ENCODE measurements at regions of chr2 and their contacts with region 1.

Region 1: GRCh38 chr2:191150600-191151330 is at the start of gene STAT4:
- DNase-seq: peak; percentile 45
- ATAC-seq: peak; percentile 89
- H3K4me3 ChIP-seq: peak within 1 kb of the TSS; percentile 78
- H3K27ac ChIP-seq: no peak within 1 kb of the TSS
- H3K4me1 ChIP-seq: peaks cover 7% of the 10 kb centered on the region
- H3K27me3 ChIP-seq: peaks cover 0 to 3% of the 10 kb centered on the region in 2 experiments; a peak in 1 of 4 replicates
- CTCF ChIP-seq: no peak; a peak in 1 of 6 replicates
- EP300 ChIP-seq: peak; percentile 84 to 89; a peak in 3 of 4 replicates
- POLR2A ChIP-seq: peak; percentile 62
- RAD21 ChIP-seq: peak; percentile 28; the same call in 1 of the 2 replicates
- polyA plus RNA-seq, gene STAT4: 3.1 to 4.4 TPM

Region 2: DNA sequence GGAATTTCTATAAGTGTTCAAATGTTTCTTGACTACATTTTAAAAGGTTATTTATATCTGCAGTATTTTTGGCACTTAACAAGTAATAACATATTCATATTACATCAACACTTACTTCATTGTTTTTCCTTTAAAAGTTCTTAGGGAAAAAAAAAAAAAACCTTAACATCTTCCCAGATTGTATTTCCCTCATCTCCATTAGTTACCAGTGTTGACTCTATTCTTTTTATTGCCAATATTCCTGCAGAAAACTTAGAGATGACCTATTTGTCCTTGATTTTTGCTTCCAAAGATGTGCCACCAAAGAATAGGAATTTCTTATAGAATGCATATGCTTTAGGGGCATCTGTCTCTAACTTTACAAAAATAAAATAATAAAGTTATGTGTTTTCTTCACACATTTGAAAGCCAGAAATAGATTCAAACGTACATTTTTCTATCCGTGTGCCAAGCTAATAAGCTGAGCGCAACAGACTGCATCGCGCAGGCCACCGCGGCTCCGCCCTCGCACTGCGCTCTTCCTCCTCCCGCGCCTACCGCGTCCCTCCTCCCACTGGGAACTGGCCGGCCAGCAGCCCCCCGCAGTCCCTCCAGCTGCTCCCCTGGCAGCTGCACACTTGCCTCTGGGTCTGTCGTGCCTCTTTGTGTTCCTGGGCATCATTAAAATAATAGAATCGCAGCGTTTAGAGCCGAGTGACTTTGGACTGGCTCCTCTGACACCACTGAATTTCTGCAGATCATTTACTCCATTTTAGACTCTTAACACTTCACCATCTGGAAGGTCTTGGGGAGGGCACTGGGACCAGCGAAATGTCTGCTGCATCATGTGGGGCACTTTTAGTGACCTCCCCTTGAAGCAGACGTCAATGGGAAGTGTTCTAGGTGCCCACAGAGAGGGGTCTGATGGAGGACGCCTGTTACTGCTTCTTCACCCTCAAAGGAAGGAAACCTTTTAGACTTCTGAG is 523.0 kb before region 1 on chr2:
- CTCF ChIA-PET with region 1: no interaction called
- POLR2A ChIA-PET with region 1: no interaction called
- RAD21 ChIA-PET with region 1: no interaction called
- SMC1A ChIA-PET with region 1: no interaction called
- in situ Hi-C with region 1: no loop called
- intact Hi-C with region 1: no loop called
- DNase-seq: no peak
- ATAC-seq: peak; percentile 90
- H3K4me3 ChIP-seq: peak overlapping the region; percentile 41
- H3K27ac ChIP-seq: no peak overlapping the region
- H3K4me1 ChIP-seq: no peaks in the 10 kb centered on the region
- H3K27me3 ChIP-seq: no peaks in the 10 kb centered on the region
- CTCF ChIP-seq: no peak
- EP300 ChIP-seq: no peak
- POLR2A ChIP-seq: no peak
- RAD21 ChIP-seq: no peak

Region 3: GRCh38 chr2:190822043-190822442 is 328.7 kb before region 1 on chr2:
- CTCF ChIA-PET with region 1: no interaction called
- POLR2A ChIA-PET with region 1: no interaction called
- RAD21 ChIA-PET with region 1: no interaction called
- SMC1A ChIA-PET with region 1: no interaction called
- in situ Hi-C with region 1: no loop called
- intact Hi-C with region 1: no loop called
- DNase-seq: no peak
- ATAC-seq: no peak
- H3K4me3 ChIP-seq: no peak overlapping the region
- H3K27ac ChIP-seq: no peak overlapping the region
- H3K4me1 ChIP-seq: no peaks in the 10 kb centered on the region
- H3K27me3 ChIP-seq: no peaks in the 10 kb centered on the region
- CTCF ChIP-seq: no peak
- EP300 ChIP-seq: no peak
- POLR2A ChIP-seq: no peak
- RAD21 ChIP-seq: no peak

Region 4: DNA sequence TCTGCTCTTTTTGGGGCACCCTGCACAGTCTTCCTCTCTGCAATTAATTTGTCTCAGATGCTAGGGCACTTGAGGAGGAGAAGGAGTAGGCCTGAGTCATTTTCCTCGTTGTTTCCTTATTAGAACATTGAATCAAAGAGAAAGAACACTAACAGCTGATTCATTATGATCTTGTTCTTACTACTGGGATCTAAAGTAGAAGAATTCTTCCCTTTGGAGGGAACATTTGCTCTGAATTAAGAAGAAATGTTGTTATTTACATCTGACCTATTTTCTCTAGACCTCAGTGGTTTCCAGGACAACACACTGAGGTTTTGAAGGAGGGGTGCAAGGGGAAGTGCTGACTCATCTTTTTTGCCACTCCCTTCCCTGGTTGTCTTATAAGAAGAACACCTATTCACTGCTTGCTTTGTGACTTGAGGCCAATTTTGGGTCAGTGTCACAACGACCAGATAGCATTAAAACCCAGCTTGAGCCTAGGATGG is 112.5 kb before region 1 on chr2:
- CTCF ChIA-PET with region 1: interaction called, 13 read pairs
- POLR2A ChIA-PET with region 1: no interaction called
- RAD21 ChIA-PET with region 1: no interaction called
- SMC1A ChIA-PET with region 1: interaction called, 5 read pairs
- in situ Hi-C with region 1: no loop called
- intact Hi-C with region 1: no loop called
- DNase-seq: no peak
- ATAC-seq: peak; percentile 68
- H3K4me3 ChIP-seq: no peak overlapping the region
- H3K27ac ChIP-seq: no peak overlapping the region
- H3K4me1 ChIP-seq: no peaks in the 10 kb centered on the region; the same call in 1 of the 2 replicates
- H3K27me3 ChIP-seq: no peaks in the 10 kb centered on the region
- CTCF ChIP-seq: no peak
- EP300 ChIP-seq: no peak
- POLR2A ChIP-seq: no peak
- RAD21 ChIP-seq: no peak

Region 5: GRCh38 chr2:191066197-191066918 is 84.4 kb before region 1 on chr2:
- CTCF ChIA-PET with region 1: interaction called, 24 read pairs
- POLR2A ChIA-PET with region 1: no interaction called
- RAD21 ChIA-PET with region 1: interaction called, 5 read pairs
- SMC1A ChIA-PET with region 1: interaction called, 26 read pairs
- in situ Hi-C with region 1: no loop called
- intact Hi-C with region 1: no loop called
- DNase-seq: no peak
- ATAC-seq: no peak
- H3K4me3 ChIP-seq: no peak overlapping the region
- H3K27ac ChIP-seq: no peak overlapping the region
- H3K4me1 ChIP-seq: no peaks in the 10 kb centered on the region
- H3K27me3 ChIP-seq: no peaks in the 10 kb centered on the region; a peak in 1 of 4 replicates
- CTCF ChIP-seq: no peak
- EP300 ChIP-seq: no peak
- POLR2A ChIP-seq: no peak
- RAD21 ChIP-seq: no peak

Region 6: DNA sequence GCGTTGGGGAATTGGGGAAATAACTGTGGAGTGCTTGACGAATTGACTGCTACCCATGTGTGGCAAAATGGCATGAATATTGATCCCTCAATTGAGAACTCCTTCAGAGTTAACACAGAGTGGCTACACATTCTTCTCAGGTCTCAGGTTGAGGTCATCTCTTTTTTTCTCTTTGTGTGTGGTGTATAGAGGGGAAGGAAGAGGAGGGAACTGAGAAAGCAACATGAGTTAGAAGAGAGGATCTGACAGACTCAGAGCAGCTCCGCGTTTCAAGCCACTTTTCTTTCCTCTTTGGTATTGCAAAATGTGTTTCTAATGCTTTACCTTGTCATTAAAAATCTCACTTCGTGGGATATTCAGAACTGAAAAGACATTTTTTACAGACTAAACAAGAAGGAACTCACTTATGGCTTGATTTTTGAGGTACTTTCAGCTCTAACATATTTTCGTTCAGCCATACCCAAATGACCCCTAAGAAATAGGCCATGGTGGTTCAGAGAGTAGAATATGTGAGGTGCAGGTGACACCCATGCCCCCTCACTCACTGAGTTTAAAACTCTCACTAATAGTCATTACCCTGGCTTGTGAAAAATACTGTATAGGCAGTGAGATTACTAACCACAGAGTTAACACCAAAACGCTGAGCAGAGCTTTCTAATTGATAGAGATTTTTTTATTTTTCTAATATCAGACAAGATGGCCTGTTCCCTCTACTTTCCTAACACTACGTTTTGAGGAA is 22.4 kb before region 1 on chr2:
- CTCF ChIA-PET with region 1: interaction called, 10 read pairs
- POLR2A ChIA-PET with region 1: no interaction called
- RAD21 ChIA-PET with region 1: interaction called, 5 read pairs
- SMC1A ChIA-PET with region 1: interaction called, 14 read pairs
- in situ Hi-C with region 1: no loop called
- intact Hi-C with region 1: loop called (anchors 2 kb)
- DNase-seq: no peak
- ATAC-seq: peak; percentile 94
- H3K4me3 ChIP-seq: no peak overlapping the region
- H3K27ac ChIP-seq: no peak overlapping the region
- H3K4me1 ChIP-seq: no peaks in the 10 kb centered on the region
- H3K27me3 ChIP-seq: no peaks in the 10 kb centered on the region
- CTCF ChIP-seq: no peak
- EP300 ChIP-seq: no peak
- POLR2A ChIP-seq: no peak
- RAD21 ChIP-seq: no peak

Region 7: GRCh38 chr2:191178806-191179514 is 28.2 kb after region 1 on chr2:
- CTCF ChIA-PET with region 1: interaction called, 19 read pairs
- POLR2A ChIA-PET with region 1: no interaction called
- RAD21 ChIA-PET with region 1: no interaction called
- SMC1A ChIA-PET with region 1: no interaction called
- in situ Hi-C with region 1: no loop called
- intact Hi-C with region 1: no loop called
- DNase-seq: no peak
- ATAC-seq: no peak; the same call in 2 of the 3 replicates
- H3K4me3 ChIP-seq: no peak overlapping the region
- H3K27ac ChIP-seq: no peak overlapping the region
- H3K4me1 ChIP-seq: peaks cover 14% of the 10 kb centered on the region; the same call in 1 of the 2 replicates
- H3K27me3 ChIP-seq: peaks cover 0 to 2% of the 10 kb centered on the region in 2 experiments; a peak in 1 of 4 replicates
- CTCF ChIP-seq: no peak
- EP300 ChIP-seq: no peak
- POLR2A ChIP-seq: no peak
- RAD21 ChIP-seq: no peak

Region 8: DNA sequence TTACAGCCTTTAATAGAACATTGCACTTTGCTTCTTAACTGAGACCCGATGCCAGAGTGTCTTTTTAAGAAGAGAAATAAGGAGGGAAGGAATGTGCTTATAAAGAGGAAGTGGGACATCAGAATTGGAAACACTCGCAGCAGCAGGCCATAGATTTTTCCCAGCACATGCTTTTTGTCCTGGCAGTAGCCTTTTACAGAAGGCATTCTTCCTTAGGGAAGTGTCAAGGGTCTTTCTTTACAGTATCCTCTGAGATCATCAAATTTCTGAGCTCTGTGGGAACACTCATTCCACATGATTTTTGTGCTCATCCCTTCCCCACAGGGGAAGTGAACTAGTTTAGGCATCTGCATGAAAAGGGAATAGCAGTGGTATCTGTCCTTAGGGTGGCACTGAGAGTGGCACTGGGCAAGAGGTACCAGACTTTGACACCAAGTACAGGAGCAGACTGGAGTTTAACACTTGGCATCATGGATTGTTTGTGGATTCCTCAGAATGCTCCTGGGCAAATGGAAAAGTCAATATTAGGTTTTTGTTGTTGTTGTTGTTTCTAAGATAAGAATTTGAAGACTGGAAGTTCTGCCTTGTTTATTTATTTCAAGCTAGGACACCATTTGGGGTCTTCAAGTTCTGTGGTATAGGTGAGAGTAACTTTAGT is 98.5 kb after region 1 on chr2:
- CTCF ChIA-PET with region 1: no interaction called
- POLR2A ChIA-PET with region 1: no interaction called
- RAD21 ChIA-PET with region 1: no interaction called
- SMC1A ChIA-PET with region 1: no interaction called
- in situ Hi-C with region 1: no loop called
- intact Hi-C with region 1: no loop called
- DNase-seq: no peak
- ATAC-seq: no peak
- H3K4me3 ChIP-seq: no peak overlapping the region
- H3K27ac ChIP-seq: no peak overlapping the region
- H3K4me1 ChIP-seq: no peaks in the 10 kb centered on the region
- H3K27me3 ChIP-seq: peaks cover 8 to 15% of the 10 kb centered on the region in 2 experiments
- CTCF ChIP-seq: no peak
- EP300 ChIP-seq: no peak
- POLR2A ChIP-seq: no peak
- RAD21 ChIP-seq: no peak